ENCODE measurements at regions of chr15 and their contacts with region 1.

Region 1: GRCh38 chr15:94163999-94164807 is 67.2 kb upstream of the MCTP2 start:
- H3K4me3 Mint-ChIP-seq: no peak overlapping the region
- H3K27ac Mint-ChIP-seq: peak overlapping the region; percentile 2
- H3K4me1 Mint-ChIP-seq: peaks cover 11% of the 10 kb centered on the region
- H3K27me3 Mint-ChIP-seq: peaks cover 19% of the 10 kb centered on the region

Region 2: DNA sequence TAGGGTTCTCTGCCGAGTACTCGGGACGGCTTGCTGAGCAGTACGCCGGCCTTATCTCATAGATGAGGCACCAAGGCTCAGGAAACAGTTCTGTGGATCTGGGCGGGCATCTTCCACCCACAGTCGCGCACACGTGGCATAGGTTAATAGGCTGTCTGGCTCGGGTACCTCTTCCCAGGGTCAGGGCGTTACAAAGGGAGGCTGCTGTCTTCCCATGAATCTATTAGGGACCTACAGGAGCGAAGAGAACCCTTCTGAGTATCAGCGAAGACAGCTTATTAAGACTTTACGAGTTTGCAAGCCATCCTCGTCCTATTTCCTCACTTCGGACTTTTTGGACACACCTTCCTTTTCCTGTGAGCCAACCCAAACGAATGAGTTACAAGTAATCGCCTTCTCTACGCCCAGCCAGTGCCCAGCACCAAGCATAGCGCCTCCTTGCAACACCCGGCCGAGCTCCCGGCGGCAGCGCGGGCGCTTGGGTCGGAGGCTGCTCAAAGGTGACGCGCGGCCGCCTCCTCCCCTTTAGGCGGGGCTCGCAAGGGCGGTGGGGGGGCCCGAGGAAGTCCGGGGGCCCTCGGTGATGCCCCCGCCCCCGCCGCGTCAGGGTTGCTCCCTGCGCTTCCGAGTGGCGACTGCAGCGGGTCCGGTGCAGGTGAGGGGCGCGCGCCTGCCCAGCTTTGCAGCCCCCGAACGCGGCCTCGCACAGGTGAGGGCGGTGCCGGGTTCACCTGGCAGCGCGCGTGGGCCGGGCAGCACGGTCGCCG is 66.9 kb after region 1 on chr15 and contains the start of gene MCTP2:
- intact Hi-C with region 1: loop called (anchors 5 kb)
- H3K4me3 Mint-ChIP-seq: peak within 1 kb of the TSS; percentile 76
- H3K27ac Mint-ChIP-seq: peak within 1 kb of the TSS; percentile 65
- H3K4me1 Mint-ChIP-seq: peaks cover 47% of the 10 kb centered on the region
- H3K27me3 Mint-ChIP-seq: peaks cover 66% of the 10 kb centered on the region

Region 3: DNA sequence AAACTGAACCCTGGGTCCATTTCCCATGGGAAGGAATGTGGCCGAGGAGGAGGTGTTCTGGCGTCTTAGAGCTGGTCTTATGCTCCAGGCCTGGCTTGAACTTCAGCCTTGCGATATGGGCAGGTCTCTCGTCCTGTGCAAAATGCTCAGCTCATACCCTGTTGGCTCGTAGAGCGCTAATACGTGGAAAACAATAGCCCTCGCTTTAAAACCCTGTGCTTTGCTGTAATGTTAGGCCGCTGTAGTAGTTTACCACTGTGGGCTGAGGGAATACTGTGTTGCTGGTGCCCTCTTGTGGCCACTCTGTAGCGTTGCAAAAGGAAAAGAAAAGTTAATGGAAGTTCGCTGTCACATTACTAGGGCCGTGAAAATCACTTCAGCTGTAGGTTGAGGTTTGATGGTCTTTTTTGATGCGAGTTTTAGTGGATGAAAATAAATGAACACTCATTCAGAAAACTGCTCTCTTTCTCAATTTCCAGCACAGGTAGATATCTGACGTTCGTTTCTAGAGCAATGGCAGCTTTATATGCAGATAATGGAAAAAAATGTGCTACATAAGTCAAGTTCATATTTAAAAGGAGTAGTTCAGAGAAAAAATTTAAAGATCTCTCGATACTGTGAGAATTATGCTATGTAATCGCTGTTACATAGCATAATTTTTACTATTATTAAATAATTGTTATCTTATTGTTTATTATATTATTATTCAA is 160.1 kb after region 1 on chr15:
- intact Hi-C with region 1: loop called (anchors 1 kb)
- H3K4me3 Mint-ChIP-seq: no peak overlapping the region
- H3K27ac Mint-ChIP-seq: no peak overlapping the region
- H3K4me1 Mint-ChIP-seq: peaks cover 25% of the 10 kb centered on the region
- H3K27me3 Mint-ChIP-seq: peaks cover 9% of the 10 kb centered on the region

Region 4: DNA sequence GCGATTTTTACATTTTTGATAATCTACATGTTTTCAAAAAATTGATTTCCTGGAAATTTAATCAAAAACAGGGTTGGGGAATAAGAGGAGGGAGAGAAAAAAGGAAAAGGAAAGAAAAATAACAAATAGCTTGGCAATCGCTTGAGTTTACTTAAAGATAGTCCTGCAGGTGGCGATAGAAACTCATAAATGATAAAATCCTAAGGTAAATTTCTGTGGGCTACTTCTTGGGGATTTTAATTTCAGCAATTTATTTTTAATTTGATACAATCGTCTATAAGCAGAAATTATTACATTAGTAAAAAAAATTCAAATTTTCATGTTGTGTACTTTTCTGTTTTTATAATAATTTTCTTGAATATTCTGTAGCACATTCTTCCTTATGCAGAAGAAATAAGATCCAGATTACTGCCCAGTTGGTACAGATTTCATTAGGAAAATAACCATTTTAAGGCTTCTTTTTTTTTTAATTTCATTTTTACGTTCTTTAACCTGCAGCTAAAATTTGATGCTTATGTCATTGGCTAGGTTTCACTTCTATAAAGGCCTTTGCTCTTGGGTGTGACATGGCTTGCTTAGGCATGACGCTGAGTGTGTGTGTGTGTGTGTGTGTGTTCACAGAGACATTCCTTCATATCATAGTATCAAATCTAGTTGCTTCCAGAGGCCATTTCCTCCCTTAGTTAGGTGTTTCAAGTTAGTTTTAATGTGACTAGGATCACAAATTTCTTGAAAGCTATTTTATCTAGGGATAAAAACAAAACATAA is 249.0 kb after region 1 on chr15:
- intact Hi-C with region 1: no loop called
- H3K4me3 Mint-ChIP-seq: no peak overlapping the region
- H3K27ac Mint-ChIP-seq: no peak overlapping the region
- H3K4me1 Mint-ChIP-seq: peaks cover 5% of the 10 kb centered on the region
- H3K27me3 Mint-ChIP-seq: no peaks in the 10 kb centered on the region

Region 5: GRCh38 chr15:94467034-94467433 is 302.8 kb after region 1 on chr15:
- intact Hi-C with region 1: loop called (anchors 10 kb)
- H3K4me3 Mint-ChIP-seq: no peak overlapping the region
- H3K27ac Mint-ChIP-seq: no peak overlapping the region
- H3K4me1 Mint-ChIP-seq: no peaks in the 10 kb centered on the region
- H3K27me3 Mint-ChIP-seq: no peaks in the 10 kb centered on the region

Region 6: GRCh38 chr15:94596707-94597106 is 432.5 kb after region 1 on chr15:
- intact Hi-C with region 1: loop called (anchors 10 kb)
- H3K4me3 Mint-ChIP-seq: no peak overlapping the region
- H3K27ac Mint-ChIP-seq: no peak overlapping the region
- H3K4me1 Mint-ChIP-seq: no peaks in the 10 kb centered on the region
- H3K27me3 Mint-ChIP-seq: peaks cover 75% of the 10 kb centered on the region

Measured in dendritic cell treated with granulocyte-macrophage colony-stimulating factor and Interleukin-4, amounts not matched to agents 40 ng/mL and 50 ng/mL, for 4 days (primary cell).